K562 (cell line): ENCODE measurements at regions of chr10 and their contacts with region 1.

Region 1: DNA sequence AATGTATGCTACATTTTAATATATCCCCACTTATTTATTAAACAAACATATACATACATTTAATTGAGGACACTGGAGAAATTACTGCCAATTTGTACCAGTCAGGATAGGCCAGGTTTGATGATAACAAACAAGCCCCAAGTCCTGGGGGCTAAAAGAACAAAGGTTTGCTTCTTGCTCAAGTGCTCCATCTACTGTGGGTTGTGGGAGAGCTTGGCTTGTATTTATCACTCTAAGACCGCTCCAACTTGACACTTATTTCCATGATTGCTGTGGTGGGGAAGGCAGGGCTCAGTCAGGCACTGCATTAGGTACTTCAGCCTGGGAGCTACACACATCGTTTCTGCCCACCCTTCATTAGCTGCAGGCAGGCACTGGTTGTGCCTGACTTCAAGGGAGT is 136.6 kb upstream of the ZNF32 start:
- DNase-seq: peak in 3 of 4 experiments; percentile 4 to 27 (median 9)
- ATAC-seq: peak; percentile 77
- H3K4me3 ChIP-seq: no peak overlapping the region
- H3K27ac ChIP-seq: no peak overlapping the region
- H3K4me1 ChIP-seq: no peaks in the 10 kb centered on the region
- H3K27me3 ChIP-seq: peaks cover 6 to 11% of the 10 kb centered on the region in 2 experiments
- CTCF ChIP-seq: peak; percentile 36 to 46 (median 38); a peak in 4 of 6 replicates
- EP300 ChIP-seq: no peak
- POLR2A ChIP-seq: no peak
- RAD21 ChIP-seq: peak; percentile 42 to 43; a peak in 3 of 4 replicates

Region 2: DNA sequence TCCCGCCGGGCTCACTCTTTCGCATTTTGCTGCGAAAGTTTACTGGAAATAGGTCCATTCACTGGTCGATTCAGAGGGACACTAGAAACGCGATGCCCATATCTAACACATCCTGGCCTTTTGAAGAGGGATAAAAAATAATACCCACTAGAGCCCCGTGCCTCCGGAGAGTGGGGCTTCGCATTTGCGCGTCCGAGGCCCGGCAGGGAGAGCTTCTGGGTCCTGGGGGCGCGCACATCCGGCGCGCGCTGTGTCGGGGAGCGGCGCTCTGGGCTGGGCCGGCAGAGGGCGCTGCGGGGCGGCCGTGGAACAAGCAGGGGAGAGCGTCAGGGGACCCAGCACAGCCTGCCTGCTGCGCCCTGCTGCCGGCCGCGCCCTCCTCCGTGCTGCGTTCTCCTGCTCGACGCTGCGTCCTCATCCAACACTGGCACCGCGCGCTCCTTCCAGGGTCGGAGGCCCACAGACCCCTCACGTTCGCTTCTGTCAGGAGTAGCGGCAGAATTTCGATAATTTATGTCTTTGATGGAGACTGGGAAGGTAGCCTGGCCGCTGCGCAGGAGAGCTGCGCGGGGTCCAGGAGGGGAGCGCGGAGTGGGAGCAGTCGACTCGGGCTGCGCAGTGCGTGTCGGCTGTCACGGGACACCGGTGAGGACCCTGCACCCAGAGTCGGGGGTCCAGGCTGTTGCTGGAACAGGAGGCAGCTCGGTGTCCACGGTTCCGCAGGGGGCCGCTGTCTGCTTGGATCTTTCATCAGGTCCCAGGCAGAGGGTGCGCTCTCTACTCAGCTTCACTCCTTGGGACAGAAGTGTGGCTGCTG is 95.1 kb before region 1 on chr10:
- CTCF ChIA-PET with region 1: no interaction called
- POLR2A ChIA-PET with region 1: no interaction called
- in situ Hi-C with region 1: no loop called
- intact Hi-C with region 1: loop called (anchors 5 kb)
- DNase-seq: peak; percentile 89 to 92 (median 92)
- ATAC-seq: peak; percentile 99
- H3K4me3 ChIP-seq: peak overlapping the region; percentile 31
- H3K27ac ChIP-seq: no peak overlapping the region
- H3K4me1 ChIP-seq: peaks cover 0 to 22% of the 10 kb centered on the region in 2 experiments; a peak in 2 of 5 replicates
- H3K27me3 ChIP-seq: peaks cover 21 to 59% of the 10 kb centered on the region in 2 experiments
- CTCF ChIP-seq: peak; percentile 87 to 92 (median 87)
- EP300 ChIP-seq: no peak
- POLR2A ChIP-seq: no peak
- RAD21 ChIP-seq: peak; percentile 78

Region 3: DNA sequence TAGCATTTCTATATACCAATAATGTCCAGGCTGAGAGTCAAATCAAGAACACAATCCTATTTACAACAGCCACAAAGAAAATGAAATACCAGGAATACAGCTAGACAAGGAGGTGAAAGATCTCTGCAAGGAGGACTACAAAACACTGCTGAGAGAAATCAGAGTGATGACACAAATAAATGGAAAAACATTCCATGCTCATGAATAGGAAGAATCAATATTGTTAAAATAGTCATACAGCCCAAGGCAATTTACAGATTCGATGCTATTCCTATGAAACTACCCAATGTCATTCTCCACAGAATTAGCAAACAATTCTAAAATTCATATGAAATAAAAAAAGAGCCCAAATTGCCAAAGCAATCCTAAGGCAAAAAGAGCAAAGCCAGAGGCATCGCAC is 19.7 kb before region 1 on chr10:
- CTCF ChIA-PET with region 1: no interaction called
- POLR2A ChIA-PET with region 1: no interaction called
- in situ Hi-C with region 1: no loop called
- intact Hi-C with region 1: no loop called
- DNase-seq: no peak
- ATAC-seq: no peak
- H3K4me3 ChIP-seq: no peak overlapping the region
- H3K27ac ChIP-seq: no peak overlapping the region
- H3K4me1 ChIP-seq: no peaks in the 10 kb centered on the region; a peak in 1 of 5 replicates
- H3K27me3 ChIP-seq: no peaks in the 10 kb centered on the region; a peak in 1 of 5 replicates
- CTCF ChIP-seq: no peak
- EP300 ChIP-seq: no peak
- POLR2A ChIP-seq: no peak
- RAD21 ChIP-seq: no peak